AG04450 (cell line): ENCODE measurements at regions of chr4 and their contacts with region 1.

Region 1: DNA sequence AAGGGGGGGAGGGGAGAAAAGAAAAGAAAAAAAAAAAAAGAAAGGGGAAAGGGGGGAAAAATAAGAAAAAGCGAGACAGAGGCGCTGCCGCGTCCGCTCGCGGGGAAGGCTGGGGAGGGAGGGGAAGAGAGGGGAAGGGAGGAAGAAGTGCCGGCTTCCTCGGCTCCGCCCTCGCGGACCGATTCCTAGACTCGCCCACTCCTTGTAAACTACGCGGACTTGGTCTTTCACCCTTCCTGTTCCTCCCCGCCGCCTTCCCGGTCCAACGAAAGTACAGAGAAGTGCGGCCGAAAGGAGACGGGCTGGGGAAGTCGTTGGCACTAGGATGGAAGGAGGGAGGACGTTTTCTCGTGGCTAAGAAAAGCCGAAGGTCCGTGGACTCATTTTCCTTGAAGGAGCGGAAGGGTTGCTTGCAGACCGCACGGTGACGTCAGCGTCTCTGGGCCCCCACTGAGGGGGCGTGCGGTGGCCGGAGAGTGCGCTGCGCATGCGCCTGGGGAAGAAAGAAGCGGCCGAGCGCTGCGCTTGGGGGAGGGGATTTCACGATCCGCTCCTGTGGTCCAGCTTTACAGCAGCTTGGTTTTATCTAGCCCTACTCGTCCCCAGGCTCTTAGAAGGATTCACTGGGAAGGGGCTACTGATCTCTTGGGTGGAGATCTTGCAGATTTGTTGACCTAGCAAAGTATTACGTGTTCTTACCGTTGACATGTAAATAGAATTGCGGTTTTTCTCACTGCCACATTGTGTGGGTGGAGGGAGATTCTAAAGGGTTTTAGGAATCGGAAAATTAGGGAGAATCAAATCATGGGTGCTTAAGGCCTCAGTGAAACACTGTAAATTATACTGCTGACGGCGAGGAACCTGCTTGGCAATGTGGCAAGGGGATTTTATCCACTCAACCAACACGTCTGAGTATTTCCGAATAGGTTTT is at the start of gene CCNI:
- DNase-seq: peak; percentile 96
- H3K4me3 ChIP-seq: peak within 1 kb of the TSS; percentile 82
- H3K27ac ChIP-seq: peak within 1 kb of the TSS; percentile 100
- H3K27me3 ChIP-seq: no peaks in the 10 kb centered on the region
- CTCF ChIP-seq: no peak
- polyA plus RNA-seq, gene CCNI: 178 and 226 TPM in 2 replicates

Region 2: DNA sequence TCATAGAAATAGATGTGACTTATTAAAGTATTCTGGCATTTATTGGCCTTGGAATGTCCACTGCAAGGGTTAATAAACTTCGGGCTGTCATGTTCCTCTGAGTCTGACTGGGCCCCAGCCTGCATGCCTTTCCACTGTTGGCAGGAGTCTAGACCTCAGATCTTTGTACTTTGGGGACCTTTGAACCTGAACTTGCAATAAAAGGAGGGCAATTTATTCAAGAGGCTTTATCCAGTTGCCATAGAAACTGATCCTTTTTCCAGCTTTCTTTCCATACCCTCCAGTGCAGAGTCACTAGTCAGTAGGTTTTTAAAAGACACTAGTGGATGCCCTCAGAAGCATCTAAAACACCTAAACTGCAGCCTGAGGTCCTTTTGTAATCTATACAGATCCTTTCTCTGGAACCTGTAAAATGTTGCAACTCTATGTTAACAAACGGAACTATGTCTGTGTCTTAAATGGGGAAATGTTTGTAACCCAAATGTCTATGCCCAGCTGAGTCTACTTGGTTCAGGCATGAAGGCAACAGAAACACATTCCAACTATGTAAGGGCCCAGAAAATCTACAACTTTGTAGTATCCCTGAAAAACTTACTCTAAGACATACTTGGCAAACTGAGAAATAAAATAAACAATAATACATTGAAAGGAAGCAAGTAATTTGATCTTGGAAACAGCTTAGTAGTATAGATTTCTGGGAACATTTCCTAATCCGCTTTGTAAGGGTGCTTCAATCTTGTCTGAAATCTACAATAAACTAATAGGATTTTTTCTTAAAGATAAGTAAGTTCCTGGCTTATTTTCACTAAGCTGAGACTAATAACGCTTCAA is 219.7 kb before region 1 on chr4:
- CTCF ChIA-PET with region 1: no interaction called
- POLR2A ChIA-PET with region 1: interaction called, 12 read pairs
- DNase-seq: peak; percentile 21
- H3K4me3 ChIP-seq: no peak overlapping the region
- H3K27ac ChIP-seq: no peak overlapping the region
- H3K27me3 ChIP-seq: no peaks in the 10 kb centered on the region
- CTCF ChIP-seq: no peak

Region 3: GRCh38 chr4:77156533-77156911 is 80.4 kb after region 1 on chr4:
- CTCF ChIA-PET with region 1: no interaction called
- POLR2A ChIA-PET with region 1: interaction called, 13 read pairs
- DNase-seq: peak; percentile 99
- H3K4me3 ChIP-seq: peak overlapping the region; percentile 98
- H3K27ac ChIP-seq: peak overlapping the region; percentile 99
- H3K27me3 ChIP-seq: peaks cover 13% of the 10 kb centered on the region
- CTCF ChIP-seq: no peak